ENCODE measurements at regions of chr12 and their contacts with region 1.

Region 1: DNA sequence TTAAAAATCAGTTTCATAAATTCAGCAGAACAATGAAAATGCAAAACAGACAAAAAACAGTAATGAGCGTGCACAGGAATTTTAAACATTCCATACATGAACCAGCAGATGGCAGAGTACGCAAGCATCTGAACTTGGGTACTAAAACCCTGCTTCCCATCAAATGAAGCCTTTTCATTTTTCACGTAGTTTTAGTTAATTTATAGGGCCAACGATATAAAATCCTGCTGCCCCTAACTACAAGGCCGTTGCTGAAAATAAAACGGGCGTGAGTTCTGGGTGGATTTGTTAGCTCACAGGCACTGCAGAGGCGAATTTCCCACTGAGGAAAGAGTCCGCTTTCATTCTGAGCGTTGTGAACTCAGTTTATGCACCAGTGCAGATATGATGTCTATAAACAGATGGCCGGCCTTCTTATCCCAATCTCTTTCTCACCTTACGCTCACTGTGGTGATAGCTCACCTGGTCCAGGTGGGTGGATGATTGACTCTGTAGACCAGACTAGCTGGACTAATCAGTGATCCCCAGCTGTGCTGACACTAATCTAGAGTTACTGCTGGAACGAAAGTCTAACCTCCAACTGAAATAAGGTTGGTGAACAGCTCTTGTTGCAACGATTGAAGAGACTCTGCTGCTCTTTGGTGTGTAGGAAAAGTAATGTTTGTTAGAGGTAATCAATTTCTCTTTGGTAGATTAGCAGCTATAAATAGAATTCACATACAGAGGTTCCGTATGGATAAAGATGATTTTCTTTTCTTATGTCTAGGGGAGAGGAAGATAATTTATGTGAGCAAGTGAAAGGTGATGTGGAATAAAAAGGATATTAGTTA is 89.2 kb downstream of the PDZRN4 start:
- DNase-seq: no peak
- ATAC-seq: peak; percentile 64; the same call in 2 of the 3 replicates
- H3K4me3 ChIP-seq: no peak overlapping the region
- H3K27ac ChIP-seq: no peak overlapping the region
- H3K4me1 ChIP-seq: no peaks in the 10 kb centered on the region
- H3K27me3 ChIP-seq: no peaks in the 10 kb centered on the region
- CTCF ChIP-seq: peak; percentile 52 to 81 (median 54)
- EP300 ChIP-seq: no peak
- POLR2A ChIP-seq: no peak
- RAD21 ChIP-seq: peak; percentile 85

Region 2: GRCh38 chr12:40946612-40947194 is 330.6 kb before region 1 on chr12:
- CTCF ChIA-PET with region 1: interaction called, 3 read pairs
- POLR2A ChIA-PET with region 1: no interaction called
- RAD21 ChIA-PET with region 1: interaction called, 5 read pairs
- SMC1A ChIA-PET with region 1: no interaction called
- in situ Hi-C with region 1: no loop called
- intact Hi-C with region 1: loop called (anchors 5 kb)
- DNase-seq: no peak
- ATAC-seq: no peak
- H3K4me3 ChIP-seq: no peak overlapping the region
- H3K27ac ChIP-seq: no peak overlapping the region
- H3K4me1 ChIP-seq: no peaks in the 10 kb centered on the region
- H3K27me3 ChIP-seq: no peaks in the 10 kb centered on the region
- CTCF ChIP-seq: peak; percentile 28 to 56 (median 53); a peak in 5 of 6 replicates
- EP300 ChIP-seq: no peak
- POLR2A ChIP-seq: no peak
- RAD21 ChIP-seq: peak; percentile 76

Region 3: GRCh38 chr12:41302979-41303403 is 25.7 kb after region 1 on chr12:
- CTCF ChIA-PET with region 1: interaction called, 15 read pairs
- POLR2A ChIA-PET with region 1: interaction called, 3 read pairs
- RAD21 ChIA-PET with region 1: interaction called, 7 read pairs
- SMC1A ChIA-PET with region 1: no interaction called
- in situ Hi-C with region 1: no loop called
- intact Hi-C with region 1: no loop called
- DNase-seq: peak; percentile 2
- ATAC-seq: peak; percentile 90
- H3K4me3 ChIP-seq: no peak overlapping the region
- H3K27ac ChIP-seq: no peak overlapping the region
- H3K4me1 ChIP-seq: no peaks in the 10 kb centered on the region
- H3K27me3 ChIP-seq: no peaks in the 10 kb centered on the region; a peak in 1 of 4 replicates
- CTCF ChIP-seq: no peak
- EP300 ChIP-seq: no peak
- POLR2A ChIP-seq: no peak
- RAD21 ChIP-seq: no peak

Region 4: DNA sequence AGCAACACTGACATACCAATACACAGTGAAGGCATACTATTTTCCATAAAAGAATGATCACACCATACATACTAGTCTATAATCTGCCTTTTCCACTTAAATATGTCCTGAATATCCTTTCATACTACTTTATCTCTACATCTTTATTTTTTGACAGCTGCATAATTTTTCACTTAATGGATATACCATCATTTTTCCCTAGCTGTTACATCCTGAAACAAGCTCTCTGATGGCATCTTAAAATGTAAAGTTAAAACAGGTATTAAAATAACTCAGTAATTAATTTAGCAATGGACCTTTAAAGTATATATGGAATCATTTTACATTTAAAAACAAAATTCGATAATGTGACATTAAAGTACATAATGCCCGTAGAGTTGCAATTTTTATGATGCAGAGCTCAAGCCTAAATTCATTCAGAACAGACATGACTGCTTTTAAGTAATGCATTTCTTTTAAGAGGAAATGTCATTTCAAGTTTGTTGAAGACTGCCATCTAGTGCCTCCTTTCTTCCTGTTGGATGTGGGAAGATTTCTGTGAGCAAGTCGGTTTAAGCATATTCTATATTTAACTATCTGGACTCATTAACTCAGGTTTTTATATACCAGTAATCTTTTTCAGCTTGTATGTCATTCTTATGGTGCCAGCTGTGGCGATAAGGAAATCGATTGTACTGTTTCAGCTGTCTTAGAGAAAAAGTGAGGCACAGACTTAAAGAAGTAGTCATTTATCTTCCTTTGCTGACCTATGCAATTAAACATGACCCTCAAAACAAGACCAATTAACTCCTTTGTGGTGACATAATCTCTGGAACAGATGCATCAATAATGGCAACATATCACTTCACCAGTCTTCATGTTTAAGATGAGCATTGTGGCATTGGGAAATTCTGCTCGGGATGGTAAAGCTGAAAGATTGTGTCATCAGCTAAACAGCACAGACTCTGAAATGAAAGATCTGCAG is 1291.9 kb after region 1 on chr12:
- CTCF ChIA-PET with region 1: interaction called, 5 read pairs
- POLR2A ChIA-PET with region 1: no interaction called
- RAD21 ChIA-PET with region 1: no interaction called
- SMC1A ChIA-PET with region 1: interaction called, 3 read pairs
- in situ Hi-C with region 1: no loop called
- intact Hi-C with region 1: loop called (anchors 10 kb)
- DNase-seq: peak; percentile 38
- ATAC-seq: peak; percentile 85
- H3K4me3 ChIP-seq: no peak overlapping the region
- H3K27ac ChIP-seq: no peak overlapping the region
- H3K4me1 ChIP-seq: no peaks in the 10 kb centered on the region; the same call in 1 of the 2 replicates
- H3K27me3 ChIP-seq: no peaks in the 10 kb centered on the region
- CTCF ChIP-seq: peak; percentile 54 to 66 (median 54); a peak in 5 of 6 replicates
- EP300 ChIP-seq: no peak
- POLR2A ChIP-seq: no peak
- RAD21 ChIP-seq: peak; percentile 80

Measured in GM12878 (cell line).